PC-3 (cell line): ENCODE measurements at regions of chr1 and their contacts with region 1.

Region 1: DNA sequence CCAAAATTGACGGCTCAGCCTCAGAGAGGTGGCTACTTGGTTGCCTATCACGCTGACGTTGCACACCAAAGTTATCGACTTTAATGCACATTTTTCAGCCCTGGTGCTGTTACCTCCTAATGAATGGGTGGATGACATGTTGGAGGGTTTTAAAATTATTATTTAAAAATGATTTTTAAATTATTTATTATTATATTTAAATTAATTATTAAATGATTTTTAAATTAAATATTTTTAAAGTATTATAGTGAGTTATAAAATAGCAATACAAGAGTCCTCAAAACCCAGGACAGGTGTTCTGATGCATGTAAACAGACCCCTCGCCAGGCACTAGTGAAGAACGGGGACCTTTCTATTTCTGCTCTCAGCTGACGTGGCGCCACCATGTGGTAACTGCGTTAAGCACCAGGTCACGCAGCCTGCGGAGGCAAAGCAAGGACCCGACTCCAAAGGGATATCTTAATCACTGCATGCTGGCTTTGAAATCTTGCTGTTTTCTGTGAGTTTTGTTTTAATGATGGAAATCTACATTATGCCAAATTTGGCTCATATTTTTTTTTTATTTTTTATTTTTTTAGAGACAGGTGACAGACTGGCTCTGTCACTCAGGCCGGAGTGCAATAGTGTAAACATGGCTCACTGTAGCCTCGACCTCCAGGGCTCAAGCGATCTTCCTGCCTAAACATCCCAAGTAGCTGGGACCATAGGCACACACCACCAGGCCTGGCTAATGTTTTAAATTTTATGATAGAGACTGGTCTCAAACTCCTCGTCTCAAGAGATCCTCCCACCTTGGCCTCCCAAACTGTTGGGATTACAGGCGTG is 22.6 kb downstream of the CASP9 start:
- DNase-seq: peak; percentile 71
- ATAC-seq: peak; percentile 88
- H3K4me3 ChIP-seq: no peak overlapping the region
- H3K27ac ChIP-seq: no peak overlapping the region
- H3K4me1 ChIP-seq: no peaks in the 10 kb centered on the region
- H3K27me3 ChIP-seq: no peaks in the 10 kb centered on the region
- CTCF ChIP-seq: peak; percentile 81

Region 2: DNA sequence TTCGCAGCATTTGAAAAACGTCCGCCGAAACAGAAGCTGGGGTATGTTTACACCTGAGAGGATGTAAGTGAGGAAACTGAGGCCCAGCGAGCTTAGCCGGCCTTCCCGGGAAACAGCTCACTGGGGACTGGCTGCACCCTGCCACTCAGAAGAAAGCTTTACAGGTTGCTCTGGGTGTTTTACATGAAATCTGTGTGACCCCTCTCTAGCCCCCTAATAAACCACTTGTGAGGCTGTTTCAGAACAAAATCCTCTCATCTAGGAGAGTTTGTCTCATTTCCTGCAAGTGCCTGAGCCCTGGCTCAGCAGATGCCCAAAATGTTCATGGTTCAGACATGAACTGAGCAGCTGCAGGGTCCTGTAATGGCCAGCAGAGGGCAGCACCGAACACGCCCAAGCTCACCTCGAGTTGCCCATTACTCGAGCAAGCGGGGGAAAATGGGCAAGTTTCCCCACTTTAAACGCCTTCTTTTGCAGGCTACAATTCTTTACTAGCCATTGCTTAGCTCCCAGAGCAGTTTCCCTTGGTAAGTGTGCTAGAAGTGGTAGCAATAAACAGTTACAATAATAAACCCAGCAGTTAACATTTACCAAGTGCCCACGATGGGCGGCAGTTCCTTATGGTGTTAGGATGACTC is 177.9 kb before region 1 on chr1:
- CTCF ChIA-PET with region 1: no interaction called
- POLR2A ChIA-PET with region 1: no interaction called
- intact Hi-C with region 1: loop called (anchors 2 kb)
- DNase-seq: peak; percentile 85
- ATAC-seq: peak; percentile 92
- H3K4me3 ChIP-seq: peak overlapping the region; percentile 20; the same call in 1 of the 2 replicates
- H3K27ac ChIP-seq: peak overlapping the region; percentile 39; the same call in 1 of the 2 replicates
- H3K4me1 ChIP-seq: peaks cover 13% of the 10 kb centered on the region
- H3K27me3 ChIP-seq: no peaks in the 10 kb centered on the region
- CTCF ChIP-seq: peak; percentile 98

Region 3: DNA sequence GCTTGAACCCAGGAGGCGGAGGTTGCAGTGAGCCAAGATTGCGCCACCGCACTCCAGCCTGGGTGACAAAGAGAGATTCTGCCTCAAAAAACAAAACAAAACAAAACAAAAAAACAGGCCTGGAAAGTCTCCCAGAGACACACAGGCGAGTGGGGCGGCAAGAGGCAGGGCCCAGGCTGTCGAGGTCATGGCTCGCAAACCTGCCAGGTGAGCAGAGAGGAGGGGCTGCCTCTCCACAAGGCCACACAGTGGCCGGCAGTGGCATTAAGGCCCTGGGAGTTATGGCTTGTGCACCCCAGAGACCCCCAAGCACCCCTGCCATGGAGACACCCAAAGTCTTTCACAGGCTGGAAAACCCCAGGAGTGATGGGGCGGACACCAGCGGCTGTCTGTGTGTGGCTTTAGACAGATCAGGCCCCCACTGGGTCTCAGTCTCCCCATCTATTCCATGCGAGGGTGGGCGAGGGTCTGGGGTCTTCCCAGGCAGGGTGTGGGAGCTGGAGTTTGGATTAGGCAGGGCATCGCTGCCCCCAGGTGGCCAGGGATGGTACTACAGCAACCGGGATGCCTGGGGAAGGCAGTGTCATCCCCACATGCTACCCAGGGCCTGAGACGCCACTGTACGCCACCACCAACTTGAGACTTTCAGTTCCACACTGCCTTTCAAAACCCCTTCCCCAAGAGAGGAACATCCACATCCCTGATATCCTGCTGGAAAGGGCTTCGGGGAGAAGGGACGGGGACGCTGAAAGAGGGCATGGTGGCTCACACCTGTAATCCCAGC is 70.4 kb before region 1 on chr1:
- CTCF ChIA-PET with region 1: no interaction called
- POLR2A ChIA-PET with region 1: no interaction called
- intact Hi-C with region 1: loop called (anchors 1 kb)
- DNase-seq: peak; percentile 59
- ATAC-seq: peak; percentile 30
- H3K4me3 ChIP-seq: no peak overlapping the region
- H3K27ac ChIP-seq: 0 out of 2 replicates have a peak overlapping the region, but pooled peaks have one; percentile 9
- H3K4me1 ChIP-seq: peaks cover 32% of the 10 kb centered on the region
- H3K27me3 ChIP-seq: no peaks in the 10 kb centered on the region
- CTCF ChIP-seq: peak; percentile 95

Region 4: DNA sequence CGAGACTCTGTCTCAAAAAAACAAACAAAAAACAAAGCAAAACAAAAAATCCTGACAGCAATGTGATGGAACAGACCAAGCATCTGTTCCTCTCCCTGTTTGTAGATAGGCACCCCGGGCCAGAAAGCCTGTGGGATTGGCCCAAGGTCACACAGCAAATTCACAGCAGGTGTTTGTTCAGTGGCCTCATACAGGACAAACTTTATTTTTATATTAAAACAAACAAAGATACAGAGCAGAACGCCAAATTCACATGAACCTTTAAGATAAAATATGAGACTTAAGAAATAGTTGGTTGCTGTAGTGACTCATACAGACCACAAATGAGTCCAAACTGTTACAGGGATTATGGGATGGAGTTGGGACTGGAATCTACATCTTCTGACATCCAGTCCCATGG is 47.2 kb before region 1 on chr1:
- CTCF ChIA-PET with region 1: no interaction called
- POLR2A ChIA-PET with region 1: no interaction called
- intact Hi-C with region 1: loop called (anchors 5 kb)
- DNase-seq: peak; percentile 77
- ATAC-seq: peak; percentile 78
- H3K4me3 ChIP-seq: no peak overlapping the region
- H3K27ac ChIP-seq: peak overlapping the region; percentile 18; the same call in 1 of the 2 replicates
- H3K4me1 ChIP-seq: peaks cover 11% of the 10 kb centered on the region; the same call in 1 of the 2 replicates
- H3K27me3 ChIP-seq: no peaks in the 10 kb centered on the region
- CTCF ChIP-seq: no peak

Region 5: GRCh38 chr1:15526490-15527339 is 25.3 kb after region 1 on chr1 and contains the start of gene DNAJC16:
- CTCF ChIA-PET with region 1: no interaction called
- POLR2A ChIA-PET with region 1: no interaction called
- intact Hi-C with region 1: loop called (anchors 1 kb)
- DNase-seq: peak; percentile 100
- ATAC-seq: peak; percentile 69
- H3K4me3 ChIP-seq: peak within 1 kb of the TSS; percentile 92
- H3K27ac ChIP-seq: peak within 1 kb of the TSS; percentile 80
- H3K4me1 ChIP-seq: peaks cover 25% of the 10 kb centered on the region
- H3K27me3 ChIP-seq: no peaks in the 10 kb centered on the region
- CTCF ChIP-seq: no peak; the same call in 1 of the 2 replicates
- total RNA-seq, gene DNAJC16: 9.2 and 11.7 TPM in 2 replicates

Region 6: GRCh38 chr1:15684468-15685291 is 183.3 kb after region 1 on chr1:
- CTCF ChIA-PET with region 1: no interaction called
- POLR2A ChIA-PET with region 1: no interaction called
- intact Hi-C with region 1: no loop called
- DNase-seq: no peak
- ATAC-seq: peak; percentile 37
- H3K4me3 ChIP-seq: peak overlapping the region; percentile 99
- H3K27ac ChIP-seq: no peak overlapping the region
- H3K4me1 ChIP-seq: peaks cover 32% of the 10 kb centered on the region
- H3K27me3 ChIP-seq: no peaks in the 10 kb centered on the region
- CTCF ChIP-seq: no peak